AG04449 (cell line): ENCODE measurements at regions of chr6 and their contacts with region 1.

Region 1: DNA sequence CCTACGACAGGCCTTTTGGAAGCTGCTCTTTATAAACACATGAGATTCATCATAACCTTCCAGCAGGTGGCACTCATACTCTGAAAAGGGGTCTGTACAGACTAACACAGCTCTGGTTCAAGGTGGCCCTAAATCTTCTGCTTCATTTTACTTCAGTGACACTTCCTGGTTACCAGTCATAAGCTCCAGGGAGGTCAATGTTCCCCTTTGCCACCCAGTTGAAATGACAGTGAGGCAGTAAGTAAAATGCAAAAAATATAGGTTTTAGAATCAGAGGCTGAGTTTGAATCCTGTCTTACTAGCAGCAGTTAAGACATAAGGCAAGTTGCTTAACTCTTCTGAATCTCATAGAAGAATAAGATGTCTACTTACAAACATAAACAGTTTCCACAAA is 132.8 kb downstream of the CDK19 start:
- DNase-seq: peak; percentile 17
- H3K4me3 ChIP-seq: no peak overlapping the region
- CTCF ChIP-seq: peak; percentile 59

Region 2: GRCh38 chr6:110528101-110528929 is 154.1 kb before region 1 on chr6:
- CTCF ChIA-PET with region 1: interaction called, 14 read pairs
- POLR2A ChIA-PET with region 1: no interaction called
- DNase-seq: peak; percentile 79
- H3K4me3 ChIP-seq: no peak overlapping the region
- CTCF ChIP-seq: peak; percentile 48

Region 3: DNA sequence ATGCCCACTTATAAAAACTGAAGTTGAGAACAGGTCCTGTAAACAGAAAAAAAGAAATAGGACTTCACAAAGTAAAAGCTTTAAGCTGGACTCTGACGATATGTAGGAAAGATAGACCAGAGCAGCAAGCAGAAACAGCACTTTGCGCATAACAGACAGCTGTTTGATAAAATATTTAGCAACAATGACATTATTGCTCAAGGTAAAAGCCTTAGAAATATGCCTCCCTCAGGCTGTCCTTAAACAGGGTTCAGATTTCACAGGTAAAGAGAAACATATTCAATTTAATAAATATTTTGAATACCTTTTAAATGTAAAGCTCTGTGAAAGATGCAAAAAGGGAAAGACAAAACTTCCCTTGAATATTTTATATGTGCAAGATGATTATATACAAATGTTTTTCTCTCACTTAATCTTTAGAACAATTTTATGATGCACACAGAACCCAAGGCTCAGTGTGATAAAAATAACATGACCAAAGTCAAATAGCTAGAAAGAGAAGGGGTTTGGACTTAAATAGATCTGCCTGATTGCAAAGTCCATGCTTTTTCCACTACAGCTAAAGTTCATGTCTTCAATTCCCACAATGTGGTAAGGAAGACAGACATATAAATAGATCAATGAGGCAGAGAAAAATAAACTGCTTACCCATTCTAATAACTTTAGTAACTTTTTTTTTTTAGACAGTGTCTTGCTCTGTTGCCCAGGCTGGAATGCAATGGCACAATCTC is 11.2 kb before region 1 on chr6:
- CTCF ChIA-PET with region 1: interaction called, 23 read pairs
- POLR2A ChIA-PET with region 1: no interaction called
- DNase-seq: no peak
- H3K4me3 ChIP-seq: no peak overlapping the region
- CTCF ChIP-seq: no peak

Region 4: GRCh38 chr6:110873981-110874879 is 191.8 kb after region 1 on chr6 and contains the start of gene AMD1:
- CTCF ChIA-PET with region 1: interaction called, 51 read pairs
- POLR2A ChIA-PET with region 1: interaction called, 10 read pairs
- DNase-seq: peak; percentile 84
- H3K4me3 ChIP-seq: peak within 1 kb of the TSS; percentile 85
- CTCF ChIP-seq: no peak

Region 5: DNA sequence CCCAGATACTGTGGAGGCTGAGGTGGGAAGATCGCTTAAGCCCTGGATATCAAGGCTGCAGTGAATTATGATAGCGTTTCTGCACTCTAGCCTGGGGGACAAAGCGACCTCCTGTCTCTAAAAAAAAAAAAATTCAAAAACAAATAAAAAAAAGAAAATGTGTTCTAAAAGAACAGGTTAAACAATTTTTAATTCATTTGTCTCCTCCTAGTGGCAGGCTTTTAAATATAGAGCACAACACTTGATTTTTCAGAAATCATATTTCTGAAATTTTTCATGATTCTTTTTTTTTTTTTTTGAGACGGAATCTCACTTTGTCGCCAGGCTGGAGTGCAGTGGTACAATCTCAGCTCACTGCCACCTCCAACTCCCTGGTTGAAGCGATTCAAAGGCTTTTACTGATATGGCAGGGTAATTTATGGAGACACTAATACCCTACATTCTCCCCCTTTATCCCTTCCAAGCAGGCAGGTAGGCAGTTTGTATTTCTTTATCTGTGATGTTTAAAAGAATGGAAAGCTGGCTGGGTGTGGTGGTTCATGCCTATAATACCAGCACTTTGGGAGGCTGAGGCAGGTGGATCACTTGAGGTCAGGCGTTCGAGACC is 267.3 kb after region 1 on chr6:
- CTCF ChIA-PET with region 1: interaction called, 155 read pairs
- POLR2A ChIA-PET with region 1: no interaction called
- DNase-seq: no peak
- H3K4me3 ChIP-seq: no peak overlapping the region
- CTCF ChIP-seq: peak; percentile 0

Region 6: GRCh38 chr6:110981202-110981600 is 298.7 kb after region 1 on chr6:
- CTCF ChIA-PET with region 1: interaction called, 24 read pairs
- POLR2A ChIA-PET with region 1: no interaction called
- DNase-seq: no peak
- H3K4me3 ChIP-seq: peak overlapping the region; percentile 97
- CTCF ChIP-seq: no peak